ENCODE measurements at regions of chr15 and their contacts with region 1.

Region 1: DNA sequence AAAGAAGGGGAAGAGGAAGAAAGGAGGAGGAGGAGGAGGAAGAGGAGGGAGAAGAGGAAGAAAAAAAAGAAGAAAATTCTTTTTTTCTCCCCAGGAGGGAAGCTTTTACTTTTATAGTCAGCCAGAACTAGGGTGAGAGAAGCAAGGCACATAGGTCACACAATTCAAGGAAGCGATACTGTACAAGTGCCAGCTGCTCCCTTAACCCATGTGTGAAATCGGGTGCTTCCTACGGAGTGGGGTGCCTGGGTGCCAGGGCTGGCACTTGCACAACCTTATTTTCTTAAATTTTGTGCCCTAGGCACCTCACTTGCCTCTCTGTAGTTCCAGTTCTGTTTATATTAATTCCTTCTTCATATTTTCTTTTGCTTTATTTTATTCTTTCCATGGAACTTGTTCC is 150.4 kb downstream of the LIPC start:
- DNase-seq: no peak
- ATAC-seq: no peak
- H3K4me3 ChIP-seq: no peak overlapping the region
- H3K27ac ChIP-seq: no peak overlapping the region
- H3K4me1 ChIP-seq: no peaks in the 10 kb centered on the region
- H3K27me3 ChIP-seq: no peaks in the 10 kb centered on the region
- CTCF ChIP-seq: no peak
- EP300 ChIP-seq: no peak
- POLR2A ChIP-seq: no peak
- RAD21 ChIP-seq: no peak

Region 2: GRCh38 chr15:58506064-58506490 is 76.1 kb before region 1 on chr15:
- CTCF ChIA-PET with region 1: no interaction called
- POLR2A ChIA-PET with region 1: no interaction called
- in situ Hi-C with region 1: no loop called
- intact Hi-C with region 1: no loop called
- DNase-seq: no peak
- ATAC-seq: no peak
- H3K4me3 ChIP-seq: no peak overlapping the region
- H3K27ac ChIP-seq: no peak overlapping the region
- H3K4me1 ChIP-seq: no peaks in the 10 kb centered on the region
- H3K27me3 ChIP-seq: no peaks in the 10 kb centered on the region
- CTCF ChIP-seq: no peak
- EP300 ChIP-seq: no peak
- POLR2A ChIP-seq: no peak
- RAD21 ChIP-seq: no peak

Region 3: DNA sequence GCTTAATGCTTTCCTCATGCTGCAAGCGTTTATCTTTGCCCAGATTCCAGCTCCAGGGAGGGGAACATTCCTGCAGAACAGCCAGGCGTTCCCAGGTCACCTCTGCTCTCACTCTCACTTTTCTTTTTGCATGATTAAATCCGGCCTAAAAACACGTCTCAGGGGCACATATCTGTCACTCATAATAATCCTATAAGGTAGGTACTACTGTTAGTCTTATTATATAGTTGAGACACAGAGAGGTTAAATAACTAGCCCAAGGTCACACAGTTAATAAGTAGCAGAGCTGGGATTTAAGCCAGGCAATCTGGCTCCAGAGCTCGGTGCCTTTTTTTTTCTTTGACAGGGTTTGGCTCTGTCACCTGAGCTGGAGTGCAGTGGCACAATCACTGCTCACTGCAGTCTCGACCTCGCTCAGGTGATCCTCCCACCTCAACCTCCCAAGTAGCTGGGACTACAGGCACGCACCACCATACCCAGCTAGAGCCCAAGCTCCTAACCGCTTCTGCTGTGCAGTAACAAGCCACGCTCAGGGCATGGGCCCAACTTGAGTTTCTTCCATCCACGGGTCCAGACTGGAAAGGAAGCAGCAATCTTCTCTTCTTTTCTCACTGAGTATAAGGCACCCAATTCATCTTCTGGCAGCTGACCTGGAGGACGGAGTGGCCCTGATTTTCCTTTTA is 53.8 kb before region 1 on chr15:
- CTCF ChIA-PET with region 1: no interaction called
- POLR2A ChIA-PET with region 1: no interaction called
- in situ Hi-C with region 1: loop called (anchors 5 kb)
- intact Hi-C with region 1: no loop called
- DNase-seq: peak; percentile 89
- ATAC-seq: peak; percentile 92
- H3K4me3 ChIP-seq: peak overlapping the region in 1 of 3 experiments; percentile 47; a peak in 1 of 6 replicates
- H3K27ac ChIP-seq: peak overlapping the region; percentile 78
- H3K4me1 ChIP-seq: peaks cover 61% of the 10 kb centered on the region
- H3K27me3 ChIP-seq: no peaks in the 10 kb centered on the region
- CTCF ChIP-seq: no peak
- EP300 ChIP-seq: peak in 1 of 2 experiments; percentile 61; a peak in 1 of 4 replicates
- POLR2A ChIP-seq: no peak
- RAD21 ChIP-seq: no peak; the same call in 1 of the 2 replicates

Region 4: GRCh38 chr15:58641660-58642059 is 59.5 kb after region 1 on chr15:
- CTCF ChIA-PET with region 1: no interaction called
- POLR2A ChIA-PET with region 1: no interaction called
- in situ Hi-C with region 1: no loop called
- intact Hi-C with region 1: no loop called
- DNase-seq: no peak
- ATAC-seq: no peak
- H3K4me3 ChIP-seq: no peak overlapping the region
- H3K27ac ChIP-seq: no peak overlapping the region
- H3K4me1 ChIP-seq: no peaks in the 10 kb centered on the region
- H3K27me3 ChIP-seq: no peaks in the 10 kb centered on the region
- CTCF ChIP-seq: no peak
- EP300 ChIP-seq: no peak
- POLR2A ChIP-seq: no peak
- RAD21 ChIP-seq: no peak

Measured in HepG2 (cell line).